Ovary (tissue), 10 donors: ENCODE measurements at regions of chr12 and their contacts with region 1.

Region 1: GRCh38 chr12:123150744-123151456 is at the start of gene PITPNM2:
- DNase-seq: peak; percentile 65 to 84 (median 74)
- H3K4me3 ChIP-seq: peak within 1 kb of the TSS; percentile 90
- H3K27ac ChIP-seq: peak within 1 kb of the TSS; percentile 98 to 99
- H3K4me1 ChIP-seq: peaks cover 17% of the 10 kb centered on the region
- H3K27me3 ChIP-seq: no peaks in the 10 kb centered on the region
- CTCF ChIP-seq: peak in 2 of 3 donors; percentile 34 to 35
- EP300 ChIP-seq: no peak
- POLR2A ChIP-seq: no peak
- total RNA-seq, gene PITPNM2: 11.1 to 71.8 (median 38.2) TPM

Region 2: GRCh38 chr12:122980183-122981046 is 170.5 kb before region 1 on chr12 and contains the start of gene ARL6IP4:
- intact Hi-C with region 1: loop called in 3 of 4 experiments (anchors 5 kb)
- DNase-seq: peak; percentile 56 to 79 (median 70)
- H3K4me3 ChIP-seq: peak within 1 kb of the TSS; percentile 87
- H3K27ac ChIP-seq: peak within 1 kb of the TSS; percentile 67 to 88
- H3K4me1 ChIP-seq: peaks cover 32% of the 10 kb centered on the region
- H3K27me3 ChIP-seq: no peaks in the 10 kb centered on the region
- CTCF ChIP-seq: peak in 1 of 3 donors; percentile 38
- EP300 ChIP-seq: no peak
- POLR2A ChIP-seq: peak; percentile 80
- total RNA-seq, gene ARL6IP4: 158 to 216 (median 192) TPM

Region 3: DNA sequence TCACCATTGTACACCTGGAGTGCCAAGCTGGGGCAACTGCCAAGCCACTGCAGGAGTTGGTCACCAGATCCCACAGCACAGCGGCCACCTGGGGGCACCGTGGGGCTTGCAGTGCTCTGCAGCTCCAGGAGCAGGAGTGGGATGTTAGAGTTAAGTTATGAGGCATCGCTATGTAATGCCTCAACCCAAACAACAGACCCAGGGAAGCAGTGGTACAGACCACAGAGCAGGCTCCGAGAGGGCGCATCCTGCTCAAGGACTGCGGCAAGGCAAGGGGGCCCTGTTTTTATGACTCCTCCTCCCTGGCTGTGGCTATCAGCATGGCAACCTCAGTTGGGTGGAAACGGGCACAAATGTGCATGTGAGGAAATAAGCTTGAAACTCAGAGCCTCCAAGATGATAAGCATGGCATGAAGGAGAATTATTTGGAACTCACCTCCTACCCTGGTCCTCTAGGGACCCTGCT is 107.3 kb before region 1 on chr12:
- intact Hi-C with region 1: loop called in 3 of 4 experiments (anchors 2 to 5 kb)
- DNase-seq: peak; percentile 85 to 91 (median 89)
- H3K4me3 ChIP-seq: no peak overlapping the region
- H3K27ac ChIP-seq: peak overlapping the region; percentile 72 to 77
- H3K4me1 ChIP-seq: peaks cover 42% of the 10 kb centered on the region
- H3K27me3 ChIP-seq: no peaks in the 10 kb centered on the region
- CTCF ChIP-seq: peak; percentile 41 to 88 (median 78)
- EP300 ChIP-seq: no peak
- POLR2A ChIP-seq: peak; percentile 38

Region 4: GRCh38 chr12:123056053-123056741 is 94.7 kb before region 1 on chr12:
- intact Hi-C with region 1: loop called in 1 of 4 experiments (anchors 5 kb)
- DNase-seq: peak in 2 of 5 donors; percentile 41 to 52
- H3K4me3 ChIP-seq: no peak overlapping the region
- H3K27ac ChIP-seq: peak overlapping the region in 1 of 2 donors; percentile 18
- H3K4me1 ChIP-seq: peaks cover 30% of the 10 kb centered on the region
- H3K27me3 ChIP-seq: no peaks in the 10 kb centered on the region
- CTCF ChIP-seq: no peak
- EP300 ChIP-seq: no peak
- POLR2A ChIP-seq: no peak

Region 5: DNA sequence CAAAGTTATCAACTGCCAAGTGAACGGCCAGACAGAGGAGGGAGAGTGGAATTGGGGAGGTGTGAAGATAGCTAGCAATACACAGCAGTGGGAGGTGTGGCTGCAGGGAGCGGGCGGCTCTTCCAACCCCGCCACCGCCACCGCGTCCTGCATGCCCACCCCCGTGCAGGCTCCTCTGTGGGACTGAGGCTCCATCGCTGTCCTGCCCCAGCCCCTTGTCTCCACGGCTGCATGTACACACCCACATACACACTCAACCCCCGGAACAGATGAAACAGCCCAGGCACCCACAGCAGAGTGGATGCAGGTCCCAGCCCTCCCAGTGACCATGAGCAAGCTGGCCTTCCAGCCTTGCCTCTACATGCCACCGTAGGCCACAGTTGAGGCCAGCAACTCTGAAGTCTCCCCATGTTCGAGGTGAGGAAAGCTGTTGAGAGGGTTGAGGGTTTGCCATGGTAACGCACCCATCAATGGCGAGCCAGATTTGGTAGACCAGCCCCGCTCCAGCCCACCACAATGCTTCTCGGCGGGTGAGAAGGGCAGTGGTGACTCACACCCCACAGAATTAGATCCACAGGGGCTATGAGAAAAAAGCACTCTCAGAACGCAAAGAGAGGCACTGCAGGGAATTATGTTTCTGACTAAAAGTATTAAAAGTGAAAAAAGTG is 39.3 kb before region 1 on chr12:
- intact Hi-C with region 1: loop called in 1 of 4 experiments (anchors 5 kb)
- DNase-seq: no peak
- H3K4me3 ChIP-seq: no peak overlapping the region
- H3K27ac ChIP-seq: peak overlapping the region in 1 of 2 donors; percentile 34
- H3K4me1 ChIP-seq: peaks cover 58% of the 10 kb centered on the region
- H3K27me3 ChIP-seq: no peaks in the 10 kb centered on the region
- CTCF ChIP-seq: no peak
- EP300 ChIP-seq: no peak
- POLR2A ChIP-seq: no peak